ENCODE measurements at regions of chr5 and their contacts with region 1.

Region 1: DNA sequence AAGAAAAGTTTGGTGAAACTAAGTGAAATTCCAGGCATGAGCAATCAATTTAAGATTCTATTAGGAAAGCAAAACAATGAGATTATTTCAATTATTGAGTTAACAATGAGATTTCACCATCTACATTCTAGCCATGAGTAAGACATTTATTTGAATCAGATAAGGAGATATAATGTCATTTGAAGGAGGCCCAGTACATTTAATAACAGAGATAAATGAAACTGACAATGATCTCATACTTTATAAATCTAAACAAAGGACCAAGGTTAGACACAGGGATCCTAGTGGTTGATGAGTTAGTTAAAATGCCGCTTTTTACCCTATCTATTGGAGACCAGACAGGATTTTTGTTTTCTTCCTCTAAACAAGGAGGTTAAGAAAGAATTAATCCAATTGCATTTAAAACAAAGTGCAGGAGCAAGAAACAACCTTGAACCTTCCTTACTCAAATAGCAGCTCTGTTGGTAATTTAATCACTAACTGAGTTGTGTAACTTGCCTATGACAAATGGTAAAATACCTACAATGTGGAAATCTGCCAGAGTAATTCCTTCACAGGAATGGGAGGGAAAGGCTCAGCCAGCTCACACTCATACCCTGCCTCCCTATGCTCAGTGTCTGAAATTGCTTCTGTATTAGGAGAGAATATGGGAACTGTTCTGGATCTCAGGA is 103.5 kb upstream of the NR3C1 start:
- DNase-seq: peak; percentile 64
- H3K4me3 Mint-ChIP-seq: peak overlapping the region; percentile 4
- H3K27ac Mint-ChIP-seq: peak overlapping the region; percentile 73
- H3K4me1 Mint-ChIP-seq: peaks cover 46% of the 10 kb centered on the region
- H3K27me3 Mint-ChIP-seq: no peaks in the 10 kb centered on the region
- CTCF ChIP-seq: no peak

Region 2: DNA sequence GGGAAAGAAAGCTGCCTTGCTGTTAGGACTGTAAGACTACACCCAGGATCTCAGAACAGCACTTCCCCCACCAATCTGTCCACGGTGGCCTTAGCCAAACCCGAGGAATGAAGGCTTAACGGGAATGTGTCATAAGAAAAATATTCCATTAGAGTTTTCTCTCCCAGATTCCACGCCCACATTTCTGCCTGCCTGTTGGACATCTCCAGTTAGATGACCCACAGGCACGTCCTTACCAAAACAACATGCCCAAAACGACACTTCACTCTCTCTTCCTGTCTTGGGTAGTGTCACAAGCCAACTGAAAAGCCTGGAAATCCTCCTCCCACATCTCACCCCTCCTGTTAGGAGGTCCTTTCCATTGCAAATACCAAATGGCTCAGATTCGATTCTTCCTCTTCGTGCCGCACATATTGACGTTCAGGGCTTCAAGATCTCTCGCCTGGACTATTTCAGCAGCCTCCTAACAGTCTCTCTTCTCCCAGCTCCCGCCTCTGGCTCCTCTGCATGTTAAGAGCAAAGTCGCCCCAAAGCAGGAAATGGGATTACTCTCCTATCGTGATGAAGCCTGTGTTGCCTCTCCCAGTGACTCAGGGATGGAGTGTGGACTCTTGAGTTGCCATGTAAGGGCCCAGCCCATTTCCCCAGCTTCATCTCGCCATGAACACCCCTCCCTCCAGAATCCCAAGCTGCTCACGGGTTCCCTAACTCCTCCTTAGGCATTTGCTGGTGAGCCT is 262.8 kb before region 1 on chr5:
- CTCF ChIA-PET with region 1: no interaction called
- intact Hi-C with region 1: loop called (anchors 10 kb)
- DNase-seq: peak; percentile 72
- H3K4me3 Mint-ChIP-seq: peak overlapping the region; percentile 39
- H3K27ac Mint-ChIP-seq: peak overlapping the region; percentile 63
- H3K4me1 Mint-ChIP-seq: peaks cover 57% of the 10 kb centered on the region
- H3K27me3 Mint-ChIP-seq: no peaks in the 10 kb centered on the region
- CTCF ChIP-seq: no peak

Region 3: GRCh38 chr5:143592648-143593047 is 85.6 kb after region 1 on chr5:
- CTCF ChIA-PET with region 1: no interaction called
- intact Hi-C with region 1: loop called (anchors 2 kb)
- DNase-seq: no peak
- H3K4me3 Mint-ChIP-seq: no peak overlapping the region
- H3K27ac Mint-ChIP-seq: no peak overlapping the region
- H3K4me1 Mint-ChIP-seq: peaks cover 59% of the 10 kb centered on the region
- H3K27me3 Mint-ChIP-seq: no peaks in the 10 kb centered on the region
- CTCF ChIP-seq: no peak

Region 4: DNA sequence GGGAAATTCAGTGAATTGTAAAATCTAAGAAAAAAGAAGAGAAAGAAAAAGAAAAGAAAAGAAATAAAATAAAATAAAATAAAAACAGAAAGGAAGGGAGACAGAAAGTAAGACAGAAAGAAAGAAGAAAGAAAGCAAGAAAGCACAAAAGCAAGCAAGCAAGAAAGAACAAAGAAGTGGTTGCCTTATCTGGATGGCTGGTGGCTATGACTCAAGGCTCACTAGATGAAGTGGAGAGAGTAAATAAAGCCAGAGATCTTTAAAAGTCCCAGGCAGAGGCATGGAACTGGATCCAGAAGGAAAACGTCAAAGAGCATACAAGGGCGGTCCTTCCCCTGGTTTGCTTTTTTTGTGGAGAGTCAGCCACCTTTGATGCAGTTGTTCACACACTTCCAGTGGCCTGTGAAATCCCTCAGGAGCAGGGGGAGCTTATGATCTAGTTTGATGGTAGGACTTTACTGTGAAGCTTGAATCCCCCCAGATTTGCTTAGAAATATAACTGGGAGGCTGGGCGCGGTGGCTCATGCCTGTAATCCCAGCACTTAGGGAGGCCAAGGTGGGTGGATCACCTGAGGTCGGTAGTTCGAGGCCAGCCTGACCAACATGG is 128.2 kb after region 1 on chr5:
- CTCF ChIA-PET with region 1: no interaction called
- intact Hi-C with region 1: loop called (anchors 5 kb)
- DNase-seq: peak; percentile 25
- H3K4me3 Mint-ChIP-seq: no peak overlapping the region
- H3K27ac Mint-ChIP-seq: peak overlapping the region; percentile 48
- H3K4me1 Mint-ChIP-seq: peaks cover 71% of the 10 kb centered on the region
- H3K27me3 Mint-ChIP-seq: no peaks in the 10 kb centered on the region
- CTCF ChIP-seq: no peak

Region 5: DNA sequence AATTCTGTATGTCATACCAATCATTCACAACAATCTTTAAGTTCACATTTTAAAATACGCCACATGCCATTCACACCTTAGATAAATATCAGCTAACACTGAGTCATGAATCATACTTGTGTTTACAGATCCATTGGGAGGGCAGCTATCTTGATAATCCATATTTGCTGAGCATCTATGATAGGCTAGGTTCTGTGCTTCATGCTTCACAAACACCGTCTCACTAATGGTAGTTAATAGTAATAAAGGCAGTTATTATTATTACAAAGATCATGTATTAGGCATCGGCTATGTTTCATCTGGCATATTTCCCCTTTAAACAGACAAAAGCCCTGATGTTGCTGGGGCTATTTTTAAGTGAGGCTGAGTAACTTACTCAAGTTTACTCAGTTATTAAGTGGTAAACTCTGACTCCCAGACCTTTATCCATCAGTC is 152.7 kb after region 1 on chr5:
- CTCF ChIA-PET with region 1: no interaction called
- intact Hi-C with region 1: loop called (anchors 10 kb)
- DNase-seq: no peak
- H3K4me3 Mint-ChIP-seq: peak overlapping the region; percentile 50
- H3K27ac Mint-ChIP-seq: peak overlapping the region; percentile 90
- H3K4me1 Mint-ChIP-seq: peaks cover 51% of the 10 kb centered on the region
- H3K27me3 Mint-ChIP-seq: no peaks in the 10 kb centered on the region
- CTCF ChIP-seq: no peak

Measured in Calu3 (cell line).